Transverse colon (tissue), 4 donors: ENCODE measurements at regions of chr4 and their contacts with region 1.

Region 1: DNA sequence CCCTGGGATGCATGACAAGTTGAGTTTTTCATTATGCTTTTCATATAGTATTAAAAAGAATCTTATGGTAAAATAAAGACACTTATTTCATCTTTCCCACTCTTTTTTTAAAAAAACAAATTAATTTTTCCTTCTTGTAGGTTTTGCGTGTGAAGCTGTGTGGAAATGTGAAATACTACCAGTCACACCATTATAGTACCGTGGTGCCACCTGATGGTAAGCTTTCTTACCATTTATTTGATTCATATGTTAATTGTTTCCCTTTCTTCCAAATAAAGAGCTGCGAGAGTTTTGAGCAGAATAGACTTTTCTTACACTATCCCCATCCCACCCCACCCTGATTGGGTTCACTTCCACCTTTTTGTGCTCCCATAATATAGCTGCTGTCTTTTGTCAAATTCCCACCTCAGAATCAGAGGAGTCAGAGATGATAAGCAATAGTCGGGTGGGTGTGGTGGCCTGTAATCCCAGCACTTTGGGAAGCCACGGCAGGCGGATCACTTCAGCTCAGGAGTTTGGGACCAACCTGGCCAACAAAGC is 44.3 kb downstream of the CASP6 start:
- DNase-seq: no peak
- H3K4me3 ChIP-seq: no peak overlapping the region
- H3K27ac ChIP-seq: no peak overlapping the region
- H3K4me1 ChIP-seq: no peaks in the 10 kb centered on the region
- H3K27me3 ChIP-seq: no peaks in the 10 kb centered on the region
- CTCF ChIP-seq: no peak
- EP300 ChIP-seq: no peak
- POLR2A ChIP-seq: no peak

Region 2: GRCh38 chr4:109383823-109384222 is 275.1 kb before region 1 on chr4:
- in situ Hi-C with region 1: no loop called
- intact Hi-C with region 1: no loop called
- DNase-seq: no peak
- H3K4me3 ChIP-seq: no peak overlapping the region
- H3K27ac ChIP-seq: no peak overlapping the region
- H3K4me1 ChIP-seq: no peaks in the 10 kb centered on the region
- H3K27me3 ChIP-seq: no peaks in the 10 kb centered on the region
- CTCF ChIP-seq: no peak
- EP300 ChIP-seq: no peak
- POLR2A ChIP-seq: no peak

Region 3: DNA sequence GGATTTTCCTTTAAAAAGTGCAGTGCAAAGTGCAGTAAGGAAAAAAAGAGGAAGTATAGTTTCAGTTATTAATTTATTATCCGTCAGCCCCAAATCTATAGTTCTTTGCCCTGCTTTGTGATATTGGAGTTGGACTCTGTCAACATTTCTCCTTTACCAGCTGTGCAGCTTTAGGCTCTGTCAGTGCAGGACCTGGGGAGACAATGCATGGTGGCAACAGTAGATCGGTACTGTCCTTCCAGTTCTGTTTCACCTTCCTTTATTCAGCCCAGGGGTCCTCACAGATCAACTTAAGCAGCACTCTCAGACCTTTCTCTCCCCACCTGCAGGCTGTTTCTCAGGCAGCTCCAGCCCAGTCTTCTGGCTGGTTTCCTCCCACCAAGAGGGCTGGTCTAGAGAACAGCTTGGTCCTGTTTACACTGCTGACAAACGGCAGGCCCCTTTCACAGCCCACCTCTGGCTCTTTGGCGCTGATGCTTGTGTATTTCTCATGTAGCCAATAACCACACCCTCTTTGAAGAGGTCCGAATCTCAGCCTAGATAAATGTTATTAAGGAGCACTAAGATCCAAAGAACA is 27.3 kb before region 1 on chr4:
- in situ Hi-C with region 1: no loop called
- intact Hi-C with region 1: loop called (anchors 1 kb)
- DNase-seq: no peak
- H3K4me3 ChIP-seq: no peak overlapping the region
- H3K27ac ChIP-seq: no peak overlapping the region
- H3K4me1 ChIP-seq: peaks cover 0 to 5% (median 0%) of the 10 kb centered on the region in 4 donors
- H3K27me3 ChIP-seq: no peaks in the 10 kb centered on the region
- CTCF ChIP-seq: no peak
- EP300 ChIP-seq: no peak
- POLR2A ChIP-seq: no peak

Region 4: GRCh38 chr4:109676886-109677285 is 17.9 kb after region 1 on chr4:
- in situ Hi-C with region 1: no loop called
- intact Hi-C with region 1: no loop called
- DNase-seq: no peak
- H3K4me3 ChIP-seq: no peak overlapping the region
- H3K27ac ChIP-seq: no peak overlapping the region
- H3K4me1 ChIP-seq: no peaks in the 10 kb centered on the region
- H3K27me3 ChIP-seq: no peaks in the 10 kb centered on the region
- CTCF ChIP-seq: no peak
- EP300 ChIP-seq: no peak
- POLR2A ChIP-seq: no peak

Region 5: GRCh38 chr4:109979920-109980717 is 321.2 kb after region 1 on chr4:
- in situ Hi-C with region 1: no loop called
- intact Hi-C with region 1: no loop called
- DNase-seq: no peak
- H3K4me3 ChIP-seq: no peak overlapping the region
- H3K27ac ChIP-seq: no peak overlapping the region
- H3K4me1 ChIP-seq: no peaks in the 10 kb centered on the region
- H3K27me3 ChIP-seq: no peaks in the 10 kb centered on the region
- CTCF ChIP-seq: no peak
- EP300 ChIP-seq: no peak
- POLR2A ChIP-seq: no peak